ENCODE measurements at regions of chr6 and their contacts with region 1.

Region 1: GRCh38 chr6:12637960-12638641 is 78.5 kb upstream of the PHACTR1 start:
- DNase-seq: peak; percentile 72
- ATAC-seq: peak; percentile 85
- H3K4me3 Mint-ChIP-seq: no peak overlapping the region
- H3K27ac Mint-ChIP-seq: no peak overlapping the region
- H3K4me1 Mint-ChIP-seq: peaks cover 5% of the 10 kb centered on the region
- H3K27me3 Mint-ChIP-seq: peaks cover 30% of the 10 kb centered on the region

Region 2: GRCh38 chr6:11460001-11460668 is 1178.0 kb before region 1 on chr6:
- CTCF ChIA-PET with region 1: no interaction called
- POLR2A ChIA-PET with region 1: no interaction called
- intact Hi-C with region 1: no loop called
- DNase-seq: peak; percentile 19
- ATAC-seq: peak; percentile 70
- H3K4me3 Mint-ChIP-seq: peak overlapping the region; percentile 35
- H3K27ac Mint-ChIP-seq: peak overlapping the region; percentile 93
- H3K4me1 Mint-ChIP-seq: peaks cover 33% of the 10 kb centered on the region
- H3K27me3 Mint-ChIP-seq: peaks cover 4% of the 10 kb centered on the region

Region 3: GRCh38 chr6:12595161-12595811 is 42.8 kb before region 1 on chr6:
- CTCF ChIA-PET with region 1: no interaction called
- POLR2A ChIA-PET with region 1: no interaction called
- intact Hi-C with region 1: no loop called
- DNase-seq: no peak
- ATAC-seq: no peak
- H3K4me3 Mint-ChIP-seq: no peak overlapping the region
- H3K27ac Mint-ChIP-seq: no peak overlapping the region
- H3K4me1 Mint-ChIP-seq: no peaks in the 10 kb centered on the region
- H3K27me3 Mint-ChIP-seq: peaks cover 7% of the 10 kb centered on the region

Region 4: DNA sequence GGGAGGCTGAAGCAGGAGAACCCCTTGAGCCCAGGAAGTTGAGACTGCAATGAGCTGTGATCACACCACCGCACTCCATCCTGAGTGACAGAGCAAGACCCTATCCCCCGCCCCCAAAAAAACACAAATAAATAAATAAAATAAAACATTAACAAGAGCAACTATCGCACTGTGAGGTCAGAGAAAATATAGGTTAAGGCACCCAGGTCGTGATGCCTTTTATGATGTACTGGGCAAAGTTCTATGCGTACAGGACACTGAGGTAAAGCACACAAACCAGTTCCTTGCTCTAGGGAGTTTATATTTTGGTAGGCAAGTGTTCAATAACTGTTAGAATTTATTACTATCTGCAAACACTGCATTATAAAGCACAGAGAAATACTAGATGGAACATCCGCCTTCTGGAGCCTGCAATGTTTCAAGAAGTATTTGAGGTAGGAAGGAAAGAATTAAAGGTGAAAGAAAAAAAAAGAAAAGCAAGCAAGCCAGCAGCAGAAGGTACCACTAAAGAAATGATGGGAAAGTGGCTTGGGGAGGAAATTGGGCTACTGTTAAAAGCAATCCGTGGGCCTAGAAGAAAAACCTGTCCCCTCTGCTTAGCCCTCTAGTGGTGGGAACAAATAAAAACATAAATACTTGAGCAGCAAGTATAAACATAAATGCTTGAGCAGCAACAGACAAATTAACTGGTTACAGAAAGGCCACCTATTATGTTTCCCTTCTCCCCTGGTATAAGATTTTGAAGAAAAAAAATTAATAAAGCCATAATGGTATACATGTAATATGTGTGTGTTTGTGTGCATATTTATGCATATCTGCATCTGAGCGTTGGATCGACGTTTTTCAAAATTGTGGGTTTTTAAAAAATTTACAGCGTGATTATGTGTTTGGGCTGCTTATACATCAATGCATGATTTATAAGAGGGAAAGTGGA is 206.5 kb after region 1 on chr6:
- CTCF ChIA-PET with region 1: no interaction called
- POLR2A ChIA-PET with region 1: no interaction called
- intact Hi-C with region 1: loop called in 1 of 2 experiments (anchors 1 kb)
- DNase-seq: no peak
- ATAC-seq: no peak
- H3K4me3 Mint-ChIP-seq: no peak overlapping the region
- H3K27ac Mint-ChIP-seq: no peak overlapping the region
- H3K4me1 Mint-ChIP-seq: no peaks in the 10 kb centered on the region
- H3K27me3 Mint-ChIP-seq: peaks cover 4% of the 10 kb centered on the region

Region 5: DNA sequence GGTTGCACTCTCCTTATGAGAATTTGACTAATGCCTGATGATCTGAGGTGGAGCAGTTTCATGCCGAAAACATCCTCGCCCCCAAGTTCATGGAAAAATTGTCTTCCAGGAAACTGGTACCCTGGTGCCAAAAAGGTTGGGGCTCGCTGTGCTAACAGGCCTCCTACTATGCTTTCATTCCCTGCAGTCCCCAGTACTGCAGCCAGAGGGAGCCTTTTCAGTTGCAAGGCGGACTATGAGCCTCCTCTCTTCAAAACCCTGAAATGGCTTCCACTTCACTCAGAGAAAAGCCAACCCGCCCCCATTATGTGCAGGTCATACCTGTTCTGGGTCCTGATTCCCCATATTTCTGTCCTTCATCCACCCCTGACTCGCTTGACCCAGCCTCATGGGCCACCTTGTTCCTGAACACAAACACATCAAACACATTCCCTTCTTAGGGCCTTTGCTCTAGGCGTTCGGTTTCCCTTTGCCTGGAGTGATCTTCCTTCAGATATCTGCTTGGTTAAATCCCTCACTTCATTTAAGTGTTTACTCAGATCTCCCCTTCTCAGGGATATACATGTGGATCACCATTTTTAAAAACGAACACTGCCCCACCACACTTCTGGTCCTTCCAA is 252.2 kb after region 1 on chr6:
- CTCF ChIA-PET with region 1: interaction called, 6 read pairs
- POLR2A ChIA-PET with region 1: no interaction called
- intact Hi-C with region 1: loop called (anchors 1 kb)
- DNase-seq: peak; percentile 50
- ATAC-seq: no peak
- H3K4me3 Mint-ChIP-seq: no peak overlapping the region
- H3K27ac Mint-ChIP-seq: no peak overlapping the region
- H3K4me1 Mint-ChIP-seq: no peaks in the 10 kb centered on the region
- H3K27me3 Mint-ChIP-seq: peaks cover 3% of the 10 kb centered on the region

Region 6: GRCh38 chr6:13992417-13993055 is 1354.4 kb after region 1 on chr6:
- CTCF ChIA-PET with region 1: no interaction called
- POLR2A ChIA-PET with region 1: no interaction called
- intact Hi-C with region 1: no loop called
- DNase-seq: no peak
- ATAC-seq: no peak
- H3K4me3 Mint-ChIP-seq: no peak overlapping the region
- H3K27ac Mint-ChIP-seq: no peak overlapping the region
- H3K4me1 Mint-ChIP-seq: no peaks in the 10 kb centered on the region
- H3K27me3 Mint-ChIP-seq: peaks cover 35% of the 10 kb centered on the region